ENCODE measurements at regions of chr21 and their contacts with region 1.

Region 1: DNA sequence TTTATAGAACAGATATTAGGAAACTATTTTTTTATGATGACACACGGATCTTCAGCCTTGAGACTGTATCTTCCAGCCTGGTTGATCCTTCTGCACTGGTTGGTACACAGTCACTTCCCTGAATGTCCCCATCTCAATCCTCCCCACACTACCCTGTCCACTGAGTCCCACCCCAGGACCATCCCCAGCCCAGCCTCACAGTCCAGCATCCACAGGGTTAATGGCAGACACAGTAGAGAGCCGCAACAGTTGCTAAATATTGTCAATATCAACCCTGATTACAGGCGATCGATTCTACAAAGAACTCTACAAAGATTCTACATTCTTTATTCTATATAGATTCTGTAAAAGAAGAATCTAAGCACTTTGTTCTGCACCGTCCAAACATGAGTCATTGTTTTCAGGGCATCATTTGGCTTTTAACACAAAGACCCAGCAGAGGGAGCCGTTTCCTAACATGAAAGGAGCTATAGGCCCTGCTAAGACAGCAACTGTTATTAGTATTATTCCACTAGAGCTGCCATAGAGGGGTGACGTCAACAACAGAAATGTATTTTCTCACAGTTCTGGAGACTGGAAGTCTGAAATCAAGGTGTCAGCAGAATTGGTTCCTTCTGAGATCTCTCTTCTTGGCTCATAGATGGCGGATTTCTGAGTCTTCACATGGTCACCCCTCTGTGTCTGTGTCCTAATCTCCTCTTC is 30.1 kb upstream of the IFNAR2 start:
- DNase-seq: peak; percentile 80 to 92 (median 84)
- H3K4me3 ChIP-seq: no peak overlapping the region
- H3K4me3 Mint-ChIP-seq: no peak overlapping the region
- H3K27ac ChIP-seq: no peak overlapping the region
- H3K27ac Mint-ChIP-seq: peak overlapping the region in 6 of 7 donors; percentile 65 to 88 (median 80)
- H3K4me1 ChIP-seq: peaks cover 18% of the 10 kb centered on the region
- H3K4me1 Mint-ChIP-seq: peaks cover 22 to 43% (median 32%) of the 10 kb centered on the region in 4 donors
- H3K27me3 ChIP-seq: no peaks in the 10 kb centered on the region
- H3K27me3 Mint-ChIP-seq: peaks cover 2 to 3% of the 10 kb centered on the region in 2 donors

Region 2: DNA sequence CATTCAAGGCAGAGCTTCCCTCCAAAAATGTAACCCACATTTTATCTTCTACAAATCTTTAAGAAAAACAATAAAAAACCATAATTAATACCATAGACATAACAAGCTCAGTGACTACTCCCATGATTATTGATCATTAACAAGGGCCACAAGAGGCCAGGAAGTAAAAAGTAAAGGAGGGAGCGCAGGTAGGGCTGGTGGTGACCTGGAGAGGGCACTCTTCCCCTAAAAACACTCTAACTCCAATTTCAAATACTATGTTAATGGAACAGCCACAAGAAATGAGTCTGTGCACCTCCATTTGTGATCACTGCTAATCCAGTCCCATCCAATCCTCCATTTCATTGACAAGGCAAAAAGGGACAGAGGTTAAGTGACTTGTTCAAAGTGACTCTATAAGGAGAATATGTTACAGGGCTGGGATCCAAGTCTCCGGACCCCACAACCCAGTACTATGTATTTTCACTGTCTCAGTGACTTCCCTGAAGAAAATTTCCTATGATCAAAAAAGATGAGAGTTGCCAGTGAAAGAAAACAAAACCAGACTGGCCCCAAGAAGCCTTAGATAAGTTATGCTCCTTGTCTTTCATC is 546.3 kb before region 1 on chr21:
- CTCF ChIA-PET with region 1: no interaction called
- POLR2A ChIA-PET with region 1: no interaction called
- intact Hi-C with region 1: loop called (anchors 1 kb)
- DNase-seq: peak in 4 of 5 donors; percentile 10 to 33 (median 31)
- H3K4me3 ChIP-seq: no peak overlapping the region
- H3K4me3 Mint-ChIP-seq: no peak overlapping the region
- H3K27ac ChIP-seq: no peak overlapping the region
- H3K27ac Mint-ChIP-seq: peak overlapping the region in 1 of 7 donors; percentile 51
- H3K4me1 ChIP-seq: no peaks in the 10 kb centered on the region
- H3K4me1 Mint-ChIP-seq: peaks cover 0 to 1% (median 0%) of the 10 kb centered on the region in 4 donors
- H3K27me3 ChIP-seq: no peaks in the 10 kb centered on the region
- H3K27me3 Mint-ChIP-seq: no peaks in the 10 kb centered on the region

Region 3: GRCh38 chr21:32687643-32688345 is 511.9 kb before region 1 on chr21:
- CTCF ChIA-PET with region 1: no interaction called
- POLR2A ChIA-PET with region 1: no interaction called
- intact Hi-C with region 1: no loop called
- DNase-seq: no peak
- H3K4me3 ChIP-seq: no peak overlapping the region
- H3K4me3 Mint-ChIP-seq: no peak overlapping the region
- H3K27ac ChIP-seq: no peak overlapping the region
- H3K27ac Mint-ChIP-seq: peak overlapping the region in 1 of 7 donors; percentile 8
- H3K4me1 ChIP-seq: no peaks in the 10 kb centered on the region
- H3K4me1 Mint-ChIP-seq: peaks cover 0 to 1% (median 0%) of the 10 kb centered on the region in 4 donors
- H3K27me3 ChIP-seq: no peaks in the 10 kb centered on the region
- H3K27me3 Mint-ChIP-seq: no peaks in the 10 kb centered on the region

Region 4: DNA sequence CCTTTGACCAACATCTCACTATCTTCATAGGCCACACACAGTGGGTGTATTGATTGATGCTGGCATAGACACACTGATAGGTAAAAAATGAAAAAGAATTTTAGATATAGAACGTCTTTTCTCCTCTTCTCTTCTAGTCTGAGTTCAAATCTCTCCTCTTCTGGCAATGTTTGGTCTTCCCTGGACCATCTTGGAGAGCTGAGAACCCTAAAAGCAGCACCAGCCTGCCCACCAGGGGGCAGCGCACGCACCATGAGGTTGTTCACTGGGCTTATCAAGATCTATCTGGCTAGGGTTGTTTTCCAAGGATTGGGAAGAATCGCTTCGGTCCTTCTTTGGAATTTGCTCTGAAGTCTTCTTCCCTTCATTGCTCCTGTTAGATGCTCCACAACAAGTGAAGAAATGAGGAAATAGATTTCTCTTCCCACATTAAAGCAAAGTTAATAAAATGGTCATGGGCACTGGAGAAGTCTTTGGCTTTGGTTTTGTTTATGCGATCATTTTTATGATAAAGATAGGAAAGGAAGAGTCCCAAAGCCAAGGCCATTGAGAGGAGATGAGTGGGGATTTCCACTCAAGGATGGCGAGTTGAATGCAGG is 277.9 kb before region 1 on chr21:
- CTCF ChIA-PET with region 1: interaction called, 17 read pairs
- POLR2A ChIA-PET with region 1: no interaction called
- intact Hi-C with region 1: no loop called
- DNase-seq: peak in 3 of 5 donors; percentile 18 to 35 (median 20)
- H3K4me3 ChIP-seq: no peak overlapping the region
- H3K4me3 Mint-ChIP-seq: no peak overlapping the region
- H3K27ac ChIP-seq: no peak overlapping the region
- H3K27ac Mint-ChIP-seq: peak overlapping the region in 1 of 7 donors; percentile 82
- H3K4me1 ChIP-seq: peaks cover 2% of the 10 kb centered on the region
- H3K4me1 Mint-ChIP-seq: peaks cover 5 to 17% (median 8%) of the 10 kb centered on the region in 4 donors
- H3K27me3 ChIP-seq: no peaks in the 10 kb centered on the region
- H3K27me3 Mint-ChIP-seq: no peaks in the 10 kb centered on the region

Region 5: GRCh38 chr21:33127154-33127893 is 72.3 kb before region 1 on chr21:
- CTCF ChIA-PET with region 1: interaction called, 41 read pairs
- POLR2A ChIA-PET with region 1: no interaction called
- intact Hi-C with region 1: loop called (anchors 1 kb)
- DNase-seq: peak; percentile 31 to 48 (median 41)
- H3K4me3 ChIP-seq: peak overlapping the region in 1 of 2 donors; percentile 20
- H3K4me3 Mint-ChIP-seq: peak overlapping the region in 7 of 8 donors; percentile 73 to 82 (median 75)
- H3K27ac ChIP-seq: no peak overlapping the region
- H3K27ac Mint-ChIP-seq: no peak overlapping the region
- H3K4me1 ChIP-seq: peaks cover 7% of the 10 kb centered on the region
- H3K4me1 Mint-ChIP-seq: peaks cover 4 to 7% (median 6%) of the 10 kb centered on the region in 4 donors
- H3K27me3 ChIP-seq: no peaks in the 10 kb centered on the region
- H3K27me3 Mint-ChIP-seq: peaks cover 12 to 25% of the 10 kb centered on the region in 2 donors

Region 6: GRCh38 chr21:33238565-33239255 is 39.0 kb after region 1 on chr21:
- CTCF ChIA-PET with region 1: interaction called, 17 read pairs
- POLR2A ChIA-PET with region 1: interaction called, 7 read pairs
- intact Hi-C with region 1: loop called (anchors 2 kb)
- DNase-seq: peak in 4 of 5 donors; percentile 22 to 43 (median 24)
- H3K4me3 ChIP-seq: peak overlapping the region in 1 of 2 donors; percentile 40
- H3K4me3 Mint-ChIP-seq: peak overlapping the region; percentile 64 to 79 (median 70)
- H3K27ac ChIP-seq: peak overlapping the region; percentile 60
- H3K27ac Mint-ChIP-seq: peak overlapping the region; percentile 65 to 94 (median 88)
- H3K4me1 ChIP-seq: peaks cover 93% of the 10 kb centered on the region
- H3K4me1 Mint-ChIP-seq: peaks cover 66 to 92% (median 78%) of the 10 kb centered on the region in 4 donors
- H3K27me3 ChIP-seq: no peaks in the 10 kb centered on the region
- H3K27me3 Mint-ChIP-seq: no peaks in the 10 kb centered on the region

Region 7: DNA sequence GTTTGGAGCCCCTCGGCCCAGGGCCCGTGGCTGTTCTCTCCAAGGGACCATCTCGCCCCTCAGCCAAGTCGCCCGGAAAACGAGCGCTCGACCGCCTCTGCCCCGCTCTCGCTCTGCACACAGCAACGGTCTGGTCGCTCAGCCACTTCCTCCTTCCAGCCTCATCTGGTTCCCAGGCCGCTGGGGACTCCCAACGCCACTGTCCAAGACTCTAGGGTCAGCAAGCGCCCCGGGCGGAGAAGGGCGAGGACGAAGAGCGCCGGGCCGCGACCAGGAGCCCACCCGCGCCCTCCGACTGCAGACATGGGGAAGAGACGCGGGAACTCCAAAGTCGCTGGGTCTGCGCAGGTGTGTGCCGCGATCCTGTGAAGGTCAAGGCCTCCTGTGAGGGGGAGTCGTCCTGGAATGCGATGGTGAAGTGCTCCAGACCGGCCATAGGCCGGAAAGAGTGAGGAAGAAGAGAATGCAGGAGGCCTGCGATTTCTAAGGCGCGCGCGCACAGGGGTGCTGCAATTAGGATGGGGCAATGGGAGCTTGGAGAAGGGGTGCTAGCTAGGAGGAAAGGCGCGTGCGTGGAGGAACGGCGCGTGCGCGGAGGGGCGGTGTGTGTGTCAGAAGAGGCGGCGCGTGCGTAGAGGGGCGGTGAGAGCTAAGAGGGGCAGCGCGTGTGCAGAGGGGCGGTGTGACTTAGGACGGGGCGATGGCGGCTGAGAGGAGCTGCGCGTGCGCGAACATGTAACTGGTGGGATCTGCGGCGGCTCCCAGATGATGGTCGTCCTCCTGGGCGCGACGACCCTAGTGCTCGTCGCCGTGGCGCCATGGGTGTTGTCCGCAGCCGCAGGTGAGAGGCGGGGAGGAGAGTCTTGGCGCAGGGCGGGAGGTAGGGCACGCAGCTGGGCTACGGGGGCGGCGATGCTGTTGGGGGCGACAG is 124.9 kb after region 1 on chr21 and contains the start of gene IFNAR1:
- CTCF ChIA-PET with region 1: interaction called, 5 read pairs
- POLR2A ChIA-PET with region 1: interaction called, 8 read pairs
- intact Hi-C with region 1: loop called (anchors 1 kb)
- DNase-seq: peak; percentile 94 to 99 (median 98)
- H3K4me3 ChIP-seq: peak within 1 kb of the TSS; percentile 90 to 99
- H3K4me3 Mint-ChIP-seq: no peak within 1 kb of the TSS
- H3K27ac ChIP-seq: peak within 1 kb of the TSS; percentile 95
- H3K27ac Mint-ChIP-seq: no peak within 1 kb of the TSS
- H3K4me1 ChIP-seq: peaks cover 39% of the 10 kb centered on the region
- H3K4me1 Mint-ChIP-seq: peaks cover 18 to 32% (median 26%) of the 10 kb centered on the region in 4 donors
- H3K27me3 ChIP-seq: no peaks in the 10 kb centered on the region
- H3K27me3 Mint-ChIP-seq: no peaks in the 10 kb centered on the region
- total RNA-seq, gene IFNAR1: 60.1 to 62.5 TPM

Region 8: GRCh38 chr21:33441489-33442477 is 242.1 kb after region 1 on chr21:
- CTCF ChIA-PET with region 1: interaction called, 62 read pairs
- POLR2A ChIA-PET with region 1: interaction called, 10 read pairs
- intact Hi-C with region 1: loop called (anchors 1 kb)
- DNase-seq: no peak
- H3K4me3 ChIP-seq: no peak overlapping the region
- H3K4me3 Mint-ChIP-seq: no peak overlapping the region
- H3K27ac ChIP-seq: no peak overlapping the region
- H3K27ac Mint-ChIP-seq: peak overlapping the region in 4 of 7 donors; percentile 14 to 53 (median 30)
- H3K4me1 ChIP-seq: no peaks in the 10 kb centered on the region
- H3K4me1 Mint-ChIP-seq: peaks cover 5 to 9% (median 7%) of the 10 kb centered on the region in 4 donors
- H3K27me3 ChIP-seq: no peaks in the 10 kb centered on the region
- H3K27me3 Mint-ChIP-seq: no peaks in the 10 kb centered on the region